ENCODE measurements at regions of chr2 and their contacts with region 1.

Region 1: DNA sequence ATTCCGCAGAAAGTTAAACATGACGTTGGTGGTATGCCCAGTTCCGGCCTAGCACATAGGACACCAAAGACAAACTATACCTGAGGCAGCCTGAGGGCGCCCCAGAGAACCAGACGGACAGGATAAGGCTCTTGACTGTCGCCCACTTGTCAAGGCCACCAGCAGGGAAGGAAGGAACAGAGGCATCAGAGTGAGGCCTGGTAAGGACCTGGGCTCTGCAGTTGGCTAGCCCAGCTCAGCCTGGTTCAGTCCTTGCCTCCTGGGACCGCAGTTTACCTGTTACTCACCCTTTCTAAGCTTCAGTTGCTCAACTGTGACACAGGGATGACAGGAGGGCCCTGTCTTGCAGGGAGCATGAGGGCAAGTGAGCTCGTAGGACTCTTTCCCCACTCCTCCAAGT is 82.1 kb downstream of the ACTR2 start:
- DNase-seq: no peak

Region 2: DNA sequence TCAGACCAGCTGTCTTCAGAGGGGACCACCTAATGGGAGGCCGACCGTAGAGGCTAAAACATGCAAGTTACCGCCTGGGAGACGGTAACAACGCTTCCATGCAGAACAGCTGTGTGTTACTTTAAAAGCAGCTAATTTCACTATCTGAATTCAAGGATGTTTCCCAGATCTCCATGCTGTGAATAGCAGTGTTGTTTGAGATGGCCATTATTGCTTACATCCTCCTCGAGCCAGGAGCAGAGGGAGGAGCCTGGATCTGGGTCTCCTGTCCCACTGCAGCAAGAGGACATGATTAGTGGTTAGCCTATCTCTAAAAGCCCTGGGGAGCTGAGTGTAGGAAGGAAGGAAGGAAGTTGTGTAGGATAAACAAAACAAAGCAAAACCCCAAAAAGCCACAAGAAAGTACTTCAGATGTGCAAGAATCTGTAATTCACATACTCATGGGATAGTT is 31.2 kb before region 1 on chr2:
- intact Hi-C with region 1: loop called (anchors 5 kb)
- DNase-seq: no peak

Region 3: GRCh38 chr2:65349863-65350262 is 40.2 kb after region 1 on chr2:
- intact Hi-C with region 1: loop called (anchors 5 kb)
- DNase-seq: no peak

Region 4: DNA sequence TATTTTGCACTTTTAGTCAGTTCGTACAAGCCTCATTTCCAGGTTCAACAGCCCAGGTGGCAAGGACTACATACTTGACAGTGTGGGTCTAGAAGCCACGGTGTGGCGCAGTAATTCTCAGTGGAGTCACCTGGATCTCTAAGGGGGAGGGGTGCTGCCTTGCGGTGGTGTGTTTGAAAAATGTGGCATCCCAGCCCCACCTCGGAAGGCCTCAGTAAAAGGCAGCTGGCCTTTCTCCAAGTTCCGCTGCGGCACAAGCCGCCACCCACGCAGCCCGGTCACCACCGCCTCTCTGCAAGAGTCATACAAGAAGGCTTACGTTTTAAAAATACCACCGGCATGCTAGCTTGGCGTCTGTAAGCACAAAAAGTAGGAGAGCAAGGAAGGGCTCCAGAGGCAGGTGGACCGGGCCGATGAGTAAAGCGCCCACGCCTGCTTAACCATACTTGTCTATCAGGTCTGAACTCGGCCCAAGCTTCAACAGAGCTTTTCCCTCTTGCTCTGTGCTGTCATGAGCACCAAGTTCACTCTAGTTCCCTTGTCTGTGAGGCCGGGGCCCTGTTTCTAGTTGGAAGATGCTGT is 73.2 kb after region 1 on chr2:
- intact Hi-C with region 1: loop called (anchors 5 kb)
- DNase-seq: peak; percentile 85

Measured in cardiac septum (tissue), 1 donor.